Activated CD4-positive, alpha-beta memory T cell treated with anti-CD3 and anti-CD28 coated beads for 36 hours (primary cell): ENCODE measurements at regions of chr5 and their contacts with region 1.

Region 1: DNA sequence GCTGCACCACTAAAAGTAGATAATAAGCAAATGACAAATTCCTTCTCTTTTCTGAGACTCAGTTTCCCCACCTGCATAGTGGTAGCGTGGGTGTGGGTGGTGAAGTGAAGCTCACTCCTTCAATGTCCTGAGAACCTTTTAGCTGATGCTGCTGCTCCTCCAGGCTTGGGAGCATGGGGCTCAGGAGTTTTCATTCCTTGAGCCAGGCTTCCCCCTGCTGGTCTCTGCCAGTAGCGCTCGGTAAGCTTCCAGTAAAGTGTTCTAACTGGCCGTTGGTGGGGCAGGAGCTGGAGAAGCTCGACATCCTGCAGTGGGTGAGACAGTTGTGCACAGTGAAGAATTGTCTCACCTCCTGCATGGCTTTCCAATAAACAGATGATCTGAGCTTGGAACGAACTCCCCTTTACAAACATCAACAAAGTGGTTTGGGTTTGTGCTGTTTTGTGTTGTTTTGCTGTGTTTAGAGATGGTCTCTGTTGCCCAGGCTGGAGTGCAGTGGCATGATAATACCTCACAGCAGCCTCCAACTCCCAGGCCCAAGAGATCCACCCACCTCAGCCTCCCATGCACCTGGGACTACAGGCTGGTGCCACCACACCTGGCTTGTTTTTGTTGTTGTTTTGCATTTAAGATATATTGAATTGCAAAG is 34.6 kb downstream of the SPARC start:
- DNase-seq: peak; percentile 86
- H3K4me3 Mint-ChIP-seq: no peak overlapping the region
- H3K27ac Mint-ChIP-seq: no peak overlapping the region
- H3K4me1 Mint-ChIP-seq: peaks cover 5% of the 10 kb centered on the region
- H3K27me3 Mint-ChIP-seq: no peaks in the 10 kb centered on the region

Region 2: DNA sequence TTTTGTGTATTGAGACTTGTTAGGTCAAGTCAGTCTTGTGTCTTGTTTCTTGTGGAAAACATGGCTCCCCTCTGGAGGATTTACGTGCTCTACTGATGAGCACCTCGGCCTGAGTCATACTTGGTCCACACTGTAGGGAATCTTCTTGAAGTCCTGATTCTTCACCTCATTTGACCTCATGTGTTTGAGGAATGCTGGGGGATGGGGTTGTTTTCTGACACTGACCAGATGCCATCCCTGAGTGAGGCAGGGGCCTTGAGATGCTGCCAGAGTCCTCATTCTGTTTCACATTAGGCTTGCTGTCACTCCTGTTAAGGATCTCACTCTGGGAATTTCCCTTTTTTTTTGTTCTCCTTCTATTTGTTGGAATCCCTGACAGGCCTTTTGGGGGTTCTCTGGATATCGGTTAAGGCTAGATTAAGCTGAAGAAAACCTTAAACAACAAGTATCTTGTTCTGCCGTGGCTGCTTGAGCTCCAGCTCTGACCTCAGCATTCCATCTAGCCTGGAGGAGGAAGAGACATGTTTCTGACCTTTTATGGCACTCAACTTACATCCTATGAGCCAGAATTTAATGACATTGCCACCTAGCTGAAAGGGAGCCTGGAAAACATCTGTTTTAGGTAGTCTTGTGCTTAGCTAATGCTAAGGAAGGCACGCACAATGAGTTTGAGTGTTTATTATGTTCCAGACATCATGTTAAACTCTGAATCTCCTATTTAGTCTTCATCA is 1274.0 kb before region 1 on chr5:
- CTCF ChIA-PET with region 1: no interaction called
- POLR2A ChIA-PET with region 1: no interaction called
- intact Hi-C with region 1: no loop called
- DNase-seq: no peak
- H3K4me3 Mint-ChIP-seq: no peak overlapping the region
- H3K27ac Mint-ChIP-seq: no peak overlapping the region
- H3K4me1 Mint-ChIP-seq: peaks cover 3% of the 10 kb centered on the region
- H3K27me3 Mint-ChIP-seq: no peaks in the 10 kb centered on the region

Region 3: GRCh38 chr5:151157426-151158286 is 494.5 kb before region 1 on chr5 and contains the start of gene ANXA6:
- CTCF ChIA-PET with region 1: no interaction called
- POLR2A ChIA-PET with region 1: no interaction called
- intact Hi-C with region 1: no loop called
- DNase-seq: peak; percentile 80
- H3K4me3 Mint-ChIP-seq: peak within 1 kb of the TSS; percentile 97
- H3K27ac Mint-ChIP-seq: peak within 1 kb of the TSS; percentile 90
- H3K4me1 Mint-ChIP-seq: peaks cover 52% of the 10 kb centered on the region
- H3K27me3 Mint-ChIP-seq: no peaks in the 10 kb centered on the region
- total RNA-seq, gene ANXA6: 430 to 443 TPM

Region 4: DNA sequence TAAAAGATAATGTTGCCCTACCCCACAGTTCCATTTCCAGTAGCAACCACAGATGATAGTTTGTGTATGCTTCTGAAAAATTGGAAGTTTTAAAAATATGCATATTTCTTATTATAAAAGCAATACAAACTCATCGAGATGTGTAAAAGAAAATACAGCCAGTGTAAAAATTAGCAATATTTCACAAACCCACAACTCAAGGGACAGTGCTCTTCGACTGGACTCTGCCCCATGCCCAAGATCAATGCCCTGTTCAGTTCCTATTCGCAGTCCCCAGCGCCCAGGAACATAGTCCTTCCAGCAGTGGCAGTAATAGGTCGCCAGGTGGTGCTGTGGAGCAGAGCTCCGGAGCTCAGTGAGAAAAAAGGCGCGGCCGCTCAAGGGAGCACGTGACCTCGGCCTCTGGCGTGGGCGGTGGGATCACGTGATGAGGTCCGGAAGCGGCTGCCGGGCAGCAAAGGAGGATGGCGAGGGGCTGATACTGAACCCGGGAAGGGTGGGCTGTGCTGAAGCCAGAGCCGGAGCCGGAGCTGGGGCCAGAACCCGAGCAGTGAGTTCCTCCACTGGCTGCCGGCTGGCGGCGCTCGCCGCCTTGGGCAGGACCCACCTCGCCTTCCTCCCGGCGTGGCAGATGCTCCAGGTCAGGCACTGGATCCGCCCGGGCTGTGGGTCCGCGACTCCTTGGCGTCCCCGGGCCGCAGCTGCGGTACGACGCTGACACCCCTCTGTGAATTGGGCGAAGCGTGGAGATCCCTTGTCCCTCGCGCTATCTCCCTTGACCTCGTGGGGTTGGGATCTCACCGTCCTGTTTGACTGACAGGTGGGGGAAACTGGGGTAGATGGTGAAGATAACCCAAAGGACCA is 204.7 kb before region 1 on chr5 and contains the start of gene SLC36A1:
- CTCF ChIA-PET with region 1: interaction called, 116 read pairs
- POLR2A ChIA-PET with region 1: interaction called, 6 read pairs
- intact Hi-C with region 1: loop called (anchors 1 kb)
- DNase-seq: peak; percentile 97
- H3K4me3 Mint-ChIP-seq: peak within 1 kb of the TSS; percentile 89
- H3K27ac Mint-ChIP-seq: peak within 1 kb of the TSS; percentile 69
- H3K4me1 Mint-ChIP-seq: peaks cover 22% of the 10 kb centered on the region
- H3K27me3 Mint-ChIP-seq: peaks cover 7% of the 10 kb centered on the region
- total RNA-seq, gene SLC36A1: 3.8 to 3.9 TPM

Region 5: DNA sequence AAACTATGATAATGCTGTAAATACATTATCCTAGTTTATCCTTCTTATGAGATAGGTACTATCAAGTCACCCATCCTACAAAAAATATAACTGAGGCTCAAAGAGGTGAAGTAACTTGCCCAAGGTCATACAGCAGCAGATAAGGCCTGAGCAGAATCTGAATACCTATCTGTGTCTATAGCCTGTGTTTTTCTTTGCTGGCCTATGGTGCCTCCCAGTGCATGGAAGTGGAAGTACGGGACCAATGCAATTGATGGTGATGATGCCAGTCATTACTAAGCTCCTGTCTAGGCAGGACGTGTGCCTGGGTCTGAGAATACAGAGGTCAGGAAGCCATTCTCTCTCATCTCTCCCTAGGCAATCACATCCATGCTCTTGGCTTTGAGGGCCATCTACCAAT is 128.8 kb before region 1 on chr5:
- CTCF ChIA-PET with region 1: interaction called, 40 read pairs
- POLR2A ChIA-PET with region 1: no interaction called
- intact Hi-C with region 1: loop called (anchors 1 kb)
- DNase-seq: peak; percentile 66
- H3K4me3 Mint-ChIP-seq: no peak overlapping the region
- H3K27ac Mint-ChIP-seq: no peak overlapping the region
- H3K4me1 Mint-ChIP-seq: no peaks in the 10 kb centered on the region
- H3K27me3 Mint-ChIP-seq: no peaks in the 10 kb centered on the region

Region 6: DNA sequence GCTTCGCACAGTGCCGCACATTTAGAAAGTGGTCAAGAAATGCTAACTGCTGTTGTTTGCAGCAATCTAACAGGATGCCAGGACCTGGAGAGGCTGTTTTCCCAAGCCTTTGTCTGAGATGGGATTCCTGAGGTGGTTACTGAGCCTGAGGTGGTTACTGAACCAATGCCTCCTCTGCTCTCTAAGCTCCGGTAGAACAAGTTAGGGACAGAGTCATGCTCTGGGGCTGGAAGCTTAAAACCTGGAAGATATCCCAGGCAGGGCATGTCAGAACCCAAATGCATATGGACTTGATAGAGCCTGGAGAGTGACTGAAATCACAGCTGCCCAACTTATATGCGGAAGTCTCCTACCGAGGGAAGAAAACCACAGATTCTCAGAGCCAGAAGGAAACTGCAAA is 14.4 kb before region 1 on chr5:
- CTCF ChIA-PET with region 1: interaction called, 13 read pairs
- POLR2A ChIA-PET with region 1: interaction called, 3 read pairs
- intact Hi-C with region 1: no loop called
- DNase-seq: no peak
- H3K4me3 Mint-ChIP-seq: no peak overlapping the region
- H3K27ac Mint-ChIP-seq: no peak overlapping the region
- H3K4me1 Mint-ChIP-seq: peaks cover 2% of the 10 kb centered on the region
- H3K27me3 Mint-ChIP-seq: peaks cover 2% of the 10 kb centered on the region

Region 7: GRCh38 chr5:151740336-151740942 is 88.3 kb after region 1 on chr5:
- CTCF ChIA-PET with region 1: interaction called, 156 read pairs
- POLR2A ChIA-PET with region 1: no interaction called
- intact Hi-C with region 1: no loop called
- DNase-seq: peak; percentile 55
- H3K4me3 Mint-ChIP-seq: no peak overlapping the region
- H3K27ac Mint-ChIP-seq: no peak overlapping the region
- H3K4me1 Mint-ChIP-seq: peaks cover 23% of the 10 kb centered on the region
- H3K27me3 Mint-ChIP-seq: no peaks in the 10 kb centered on the region